ENCODE measurements at regions of chr5 and their contacts with region 1.

Region 1: GRCh38 chr5:172984243-172984953 is 827 bp downstream of the ATP6V0E1 start:
- DNase-seq: peak; percentile 73
- ATAC-seq: peak; percentile 74
- H3K4me3 Mint-ChIP-seq: peak overlapping the region; percentile 98
- H3K27ac Mint-ChIP-seq: peak overlapping the region; percentile 99
- H3K4me1 Mint-ChIP-seq: peaks cover 19% of the 10 kb centered on the region
- H3K27me3 Mint-ChIP-seq: no peaks in the 10 kb centered on the region

Region 2: GRCh38 chr5:172958331-172959046 is 25.9 kb before region 1 on chr5:
- POLR2A ChIA-PET with region 1: interaction called, 19 read pairs
- DNase-seq: peak; percentile 75
- ATAC-seq: peak; percentile 55
- H3K4me3 Mint-ChIP-seq: peak overlapping the region; percentile 93
- H3K27ac Mint-ChIP-seq: peak overlapping the region; percentile 97
- H3K4me1 Mint-ChIP-seq: peaks cover 24% of the 10 kb centered on the region
- H3K27me3 Mint-ChIP-seq: no peaks in the 10 kb centered on the region

Region 3: GRCh38 chr5:173035904-173036707 is 51.7 kb after region 1 on chr5:
- POLR2A ChIA-PET with region 1: interaction called, 11 read pairs
- DNase-seq: no peak
- ATAC-seq: no peak
- H3K4me3 Mint-ChIP-seq: peak overlapping the region; percentile 77
- H3K27ac Mint-ChIP-seq: peak overlapping the region; percentile 93
- H3K4me1 Mint-ChIP-seq: peaks cover 27% of the 10 kb centered on the region
- H3K27me3 Mint-ChIP-seq: no peaks in the 10 kb centered on the region

Region 4: DNA sequence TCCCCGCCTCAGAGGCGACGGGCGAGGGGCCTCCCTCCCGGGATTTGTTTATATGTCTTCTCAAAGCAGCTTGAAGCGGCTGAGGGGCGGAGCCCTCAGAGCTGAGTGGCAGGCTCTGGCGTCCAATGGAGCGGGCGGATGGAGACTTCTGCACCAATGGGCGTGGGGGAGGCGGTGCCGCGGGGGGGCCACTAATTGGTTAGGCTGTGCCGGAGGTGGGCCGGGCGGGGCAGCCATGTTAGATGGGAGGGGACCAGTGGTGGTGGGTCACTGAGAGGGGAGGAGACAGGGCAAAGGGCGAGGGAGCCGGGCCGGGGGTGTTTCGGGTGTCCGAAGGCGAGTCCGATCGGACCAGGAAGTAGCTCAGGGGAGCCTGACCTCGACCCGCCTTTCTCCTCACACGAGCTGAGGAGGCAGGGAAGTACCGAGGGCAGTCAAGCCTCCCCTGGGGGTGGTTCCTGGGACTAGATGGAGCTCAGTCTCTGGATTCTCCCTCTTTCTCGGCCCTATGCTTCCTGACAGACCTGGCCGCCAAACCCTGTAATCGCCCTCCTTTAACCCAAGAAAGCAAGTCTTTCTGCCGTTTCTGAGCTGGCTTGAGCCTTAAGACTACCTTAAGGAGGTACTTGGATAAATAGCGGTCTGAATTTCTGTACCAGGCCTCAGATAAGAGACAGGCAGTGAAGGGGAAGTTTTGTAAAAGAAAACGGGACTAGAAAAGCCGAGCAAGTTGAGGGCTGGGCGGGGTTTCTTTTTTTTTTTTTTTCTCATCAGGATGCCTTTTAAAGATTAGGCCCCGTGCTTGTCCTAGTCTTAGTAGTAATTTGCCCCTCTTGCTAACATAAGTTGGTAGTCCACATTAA is 72.9 kb after region 1 on chr5:
- POLR2A ChIA-PET with region 1: interaction called, 35 read pairs
- DNase-seq: peak; percentile 98
- ATAC-seq: peak; percentile 86
- H3K4me3 Mint-ChIP-seq: peak overlapping the region; percentile 96
- H3K27ac Mint-ChIP-seq: peak overlapping the region; percentile 97
- H3K4me1 Mint-ChIP-seq: peaks cover 40% of the 10 kb centered on the region
- H3K27me3 Mint-ChIP-seq: no peaks in the 10 kb centered on the region

Region 5: DNA sequence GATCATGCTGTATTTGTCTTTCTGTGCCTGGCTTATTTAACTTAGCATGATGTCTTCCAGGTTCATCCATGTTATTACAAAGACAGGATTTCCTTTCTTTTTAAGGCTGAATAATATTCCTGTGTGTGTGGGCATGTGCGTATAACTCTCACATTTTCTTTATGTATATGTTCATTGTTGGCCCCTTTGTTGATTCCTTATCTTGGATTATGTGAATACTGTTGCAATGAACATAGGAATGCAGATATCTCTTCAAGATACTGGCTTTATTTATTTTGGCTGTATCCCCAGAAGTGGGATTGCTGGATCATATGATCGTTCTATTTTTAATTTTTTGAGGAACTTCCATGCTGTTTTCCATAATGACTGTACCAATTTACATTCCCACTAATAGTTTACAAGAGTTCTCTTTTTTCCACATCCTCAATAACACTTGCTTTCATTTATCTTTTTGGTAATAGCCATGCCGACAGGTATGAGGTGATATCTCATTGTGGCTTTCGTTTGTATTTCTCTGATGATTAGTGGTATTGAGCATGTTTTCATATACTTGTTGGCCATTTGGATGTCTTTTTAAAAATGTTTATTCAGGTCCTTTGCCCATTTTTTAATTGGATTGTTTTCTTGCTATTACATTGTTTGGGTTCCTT is 109.7 kb after region 1 on chr5:
- POLR2A ChIA-PET with region 1: no interaction called
- DNase-seq: no peak
- ATAC-seq: no peak
- H3K4me3 Mint-ChIP-seq: no peak overlapping the region
- H3K27ac Mint-ChIP-seq: no peak overlapping the region
- H3K4me1 Mint-ChIP-seq: peaks cover 3% of the 10 kb centered on the region
- H3K27me3 Mint-ChIP-seq: no peaks in the 10 kb centered on the region

Region 6: GRCh38 chr5:173144200-173145176 is 160.1 kb after region 1 on chr5 and contains the start of gene BNIP1:
- POLR2A ChIA-PET with region 1: interaction called, 14 read pairs
- DNase-seq: peak; percentile 99
- ATAC-seq: peak; percentile 92
- H3K4me3 Mint-ChIP-seq: peak within 1 kb of the TSS; percentile 100
- H3K27ac Mint-ChIP-seq: peak within 1 kb of the TSS; percentile 100
- H3K4me1 Mint-ChIP-seq: peaks cover 13% of the 10 kb centered on the region
- H3K27me3 Mint-ChIP-seq: no peaks in the 10 kb centered on the region
- total RNA-seq, gene BNIP1: 13.9 to 14.0 TPM

Region 7: DNA sequence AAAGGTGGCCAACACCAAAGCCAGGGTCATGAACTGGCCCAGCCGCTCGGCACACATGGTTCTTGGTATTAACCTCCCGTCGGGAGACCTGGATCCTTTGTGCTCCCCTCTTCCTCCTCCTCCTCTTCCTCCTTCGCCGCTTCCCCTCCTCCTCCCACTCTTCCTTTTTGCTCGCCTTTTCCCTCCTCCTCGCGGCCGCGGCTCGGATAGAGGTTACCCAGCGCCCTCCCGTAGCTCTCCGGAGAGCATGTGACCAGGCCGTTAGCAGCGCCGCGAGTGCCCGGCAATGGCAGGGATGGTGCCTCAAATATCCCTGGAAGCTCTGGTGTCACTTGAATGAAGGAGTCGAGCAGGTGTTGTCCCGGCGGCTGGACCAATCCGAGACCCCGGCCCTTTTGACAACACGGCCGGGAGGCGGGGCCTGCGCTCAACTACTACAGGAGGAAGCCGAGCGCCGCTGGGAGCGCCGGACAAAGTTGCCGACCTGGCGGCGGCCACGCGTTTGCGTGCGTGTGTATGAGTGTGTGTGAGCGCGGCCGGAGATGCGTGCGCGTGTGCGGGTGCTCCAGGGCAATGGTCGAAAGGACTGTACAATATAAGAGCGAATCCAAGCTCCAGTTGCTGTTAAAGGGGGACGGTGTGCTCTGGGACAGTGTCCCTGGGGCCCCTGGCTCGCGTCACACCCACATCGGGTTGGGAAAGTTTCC is 343.9 kb after region 1 on chr5 and contains the start of gene STC2:
- POLR2A ChIA-PET with region 1: interaction called, 29 read pairs
- DNase-seq: peak; percentile 80
- ATAC-seq: peak; percentile 62
- H3K4me3 Mint-ChIP-seq: peak within 1 kb of the TSS; percentile 96
- H3K27ac Mint-ChIP-seq: peak within 1 kb of the TSS; percentile 93
- H3K4me1 Mint-ChIP-seq: peaks cover 48% of the 10 kb centered on the region
- H3K27me3 Mint-ChIP-seq: peaks cover 14% of the 10 kb centered on the region
- total RNA-seq, gene STC2: 10.9 to 14.7 TPM

Measured in activated naive CD8-positive, alpha-beta T cell treated with anti-CD3 and anti-CD28 coated beads, Interleukin-2, amount 10 ng/mL, durations not matched to agents 7 days and 5 days (primary cell).